Prostate gland (tissue), 2 donors: ENCODE measurements at regions of chr15 and their contacts with region 1.

Region 1: DNA sequence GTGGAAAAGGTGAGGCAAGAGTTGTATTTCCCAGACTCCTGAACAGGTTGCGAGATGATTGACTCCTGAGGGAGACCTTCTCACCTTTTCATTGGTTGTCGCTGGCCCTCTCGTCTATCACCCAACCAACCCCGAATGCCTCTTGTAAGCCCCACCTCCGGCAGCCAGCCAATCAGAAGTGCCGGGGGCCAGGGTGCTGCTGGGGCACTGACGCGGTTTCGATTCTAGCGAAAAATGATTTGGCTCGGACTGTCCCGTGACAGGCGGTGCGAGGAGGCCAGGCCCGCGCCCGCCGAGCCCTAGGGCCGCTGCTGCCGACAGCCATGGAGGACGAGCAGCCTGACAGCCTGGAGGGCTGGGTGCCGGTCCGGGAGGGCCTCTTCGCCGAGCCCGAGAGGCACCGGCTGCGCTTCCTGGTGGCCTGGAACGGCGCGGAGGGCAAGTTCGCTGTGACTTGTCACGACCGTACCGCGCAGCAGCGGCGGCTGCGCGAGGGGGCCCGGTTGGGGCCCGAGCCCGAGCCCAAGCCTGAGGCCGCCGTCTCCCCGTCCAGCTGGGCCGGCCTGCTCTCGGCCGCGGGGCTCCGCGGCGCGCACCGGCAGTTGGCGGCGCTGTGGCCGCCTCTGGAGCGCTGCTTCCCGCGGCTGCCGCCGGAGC is at the start of gene WHAMM:
- DNase-seq: peak; percentile 99
- H3K4me3 ChIP-seq: peak within 1 kb of the TSS; percentile 69 to 98
- H3K27ac ChIP-seq: peak within 1 kb of the TSS; percentile 99
- H3K4me1 ChIP-seq: no peaks in the 10 kb centered on the region
- H3K27me3 ChIP-seq: no peaks in the 10 kb centered on the region
- CTCF ChIP-seq: peak in 1 of 4 experiments; percentile 3
- POLR2A ChIP-seq: peak; percentile 98
- total RNA-seq, gene WHAMM: 12.5 to 13.5 TPM

Region 2: GRCh38 chr15:82540055-82540983 is 269.2 kb before region 1 on chr15 and contains the start of gene RPS17:
- intact Hi-C with region 1: loop called (anchors 5 kb)
- DNase-seq: peak; percentile 95
- H3K4me3 ChIP-seq: peak within 1 kb of the TSS; percentile 64 to 71
- H3K27ac ChIP-seq: peak within 1 kb of the TSS; percentile 81 to 85
- H3K4me1 ChIP-seq: peaks cover 10% of the 10 kb centered on the region
- H3K27me3 ChIP-seq: no peaks in the 10 kb centered on the region
- CTCF ChIP-seq: peak; percentile 99 to 100 (median 99)
- POLR2A ChIP-seq: peak; percentile 82
- total RNA-seq, gene RPS17: 995 to 3,415 TPM

Region 3: GRCh38 chr15:82749951-82750830 is 59.3 kb before region 1 on chr15:
- intact Hi-C with region 1: loop called (anchors 5 kb)
- DNase-seq: peak; percentile 93
- H3K4me3 ChIP-seq: peak overlapping the region; percentile 56 to 83
- H3K27ac ChIP-seq: peak overlapping the region; percentile 90 to 92
- H3K4me1 ChIP-seq: peaks cover 6% of the 10 kb centered on the region
- H3K27me3 ChIP-seq: no peaks in the 10 kb centered on the region
- CTCF ChIP-seq: peak in 1 of 4 experiments; percentile 19
- POLR2A ChIP-seq: peak; percentile 88